K562 (cell line): ENCODE measurements at regions of chr11 and their contacts with region 1.

Region 1: DNA sequence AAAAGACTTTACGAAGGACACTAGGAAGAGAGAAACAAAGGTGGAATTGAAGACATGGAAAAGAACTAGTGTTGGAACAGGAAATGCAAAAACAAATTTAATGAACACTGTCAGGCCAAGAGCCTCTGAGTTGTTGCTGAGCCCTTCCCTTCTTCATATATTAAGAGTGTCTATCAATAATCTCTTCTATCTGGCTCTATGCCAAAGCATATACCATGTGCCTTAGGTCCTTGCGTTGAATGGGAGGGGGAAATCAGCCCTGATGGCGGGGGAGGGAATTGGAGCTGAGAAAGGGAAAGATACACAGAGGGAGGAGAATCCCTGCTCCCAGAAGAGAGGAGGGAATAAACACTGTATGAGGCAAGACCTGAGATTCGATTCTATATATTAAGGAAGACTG is 5.5 kb upstream of the OR52B6 start:
- DNase-seq: no peak
- ATAC-seq: no peak
- H3K4me3 ChIP-seq: no peak overlapping the region
- H3K27ac ChIP-seq: no peak overlapping the region
- H3K4me1 ChIP-seq: no peaks in the 10 kb centered on the region
- H3K27me3 ChIP-seq: no peaks in the 10 kb centered on the region
- CTCF ChIP-seq: no peak
- EP300 ChIP-seq: no peak
- POLR2A ChIP-seq: no peak
- RAD21 ChIP-seq: no peak

Region 2: DNA sequence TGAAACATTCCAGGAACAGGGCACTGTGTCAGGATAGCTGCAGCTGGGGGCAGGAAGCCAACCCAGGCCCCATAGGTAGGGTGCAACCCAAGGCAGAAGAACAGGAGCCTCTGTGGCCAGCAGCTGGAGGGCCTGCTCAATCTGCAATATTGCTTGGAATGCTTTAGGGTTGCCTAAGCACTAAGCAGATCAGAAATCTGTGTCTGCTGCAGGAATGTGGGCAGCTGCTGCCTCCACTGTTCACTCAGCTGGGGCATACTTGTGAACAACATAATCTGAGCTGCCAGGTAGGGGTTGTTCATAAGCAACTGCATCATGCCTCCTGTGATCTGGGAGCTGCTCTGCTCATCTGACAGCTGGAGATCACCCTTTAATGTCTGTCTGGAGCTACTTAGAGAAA is 60.3 kb before region 1 on chr11:
- CTCF ChIA-PET with region 1: no interaction called
- POLR2A ChIA-PET with region 1: no interaction called
- in situ Hi-C with region 1: no loop called
- intact Hi-C with region 1: loop called (anchors 10 kb)
- DNase-seq: no peak
- ATAC-seq: no peak
- H3K4me3 ChIP-seq: no peak overlapping the region
- H3K27ac ChIP-seq: no peak overlapping the region
- H3K4me1 ChIP-seq: peaks cover 0 to 10% of the 10 kb centered on the region in 2 experiments; a peak in 2 of 5 replicates
- H3K27me3 ChIP-seq: peaks cover 0 to 6% of the 10 kb centered on the region in 2 experiments; a peak in 2 of 5 replicates
- CTCF ChIP-seq: no peak
- EP300 ChIP-seq: no peak
- POLR2A ChIP-seq: no peak
- RAD21 ChIP-seq: no peak

Region 3: DNA sequence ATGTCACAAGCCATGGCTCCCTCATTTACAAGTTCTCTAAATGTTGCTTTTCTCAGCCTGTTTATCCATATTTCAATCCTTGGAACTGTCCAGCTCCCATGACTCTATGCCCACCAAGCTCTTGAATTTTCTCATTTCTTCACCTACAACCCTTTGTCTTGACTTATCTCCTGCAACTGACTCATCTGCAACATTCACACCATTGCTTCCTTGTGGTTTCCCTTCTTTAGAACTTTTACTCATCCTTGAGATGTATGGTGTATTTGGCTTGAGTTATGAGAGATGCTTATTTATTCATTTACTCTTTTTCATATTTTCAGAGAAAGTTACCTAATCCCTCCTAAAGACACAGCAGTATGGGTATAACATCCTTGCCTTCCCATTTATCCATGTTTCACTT is 68.4 kb after region 1 on chr11:
- CTCF ChIA-PET with region 1: no interaction called
- POLR2A ChIA-PET with region 1: no interaction called
- in situ Hi-C with region 1: no loop called
- intact Hi-C with region 1: no loop called
- DNase-seq: no peak
- ATAC-seq: no peak
- H3K4me3 ChIP-seq: no peak overlapping the region
- H3K27ac ChIP-seq: no peak overlapping the region
- H3K4me1 ChIP-seq: no peaks in the 10 kb centered on the region
- H3K27me3 ChIP-seq: no peaks in the 10 kb centered on the region; a peak in 1 of 5 replicates
- CTCF ChIP-seq: no peak
- EP300 ChIP-seq: no peak
- POLR2A ChIP-seq: no peak
- RAD21 ChIP-seq: no peak